Caco-2 (cell line): ENCODE measurements at regions of chr1 and their contacts with region 1.

Region 1: DNA sequence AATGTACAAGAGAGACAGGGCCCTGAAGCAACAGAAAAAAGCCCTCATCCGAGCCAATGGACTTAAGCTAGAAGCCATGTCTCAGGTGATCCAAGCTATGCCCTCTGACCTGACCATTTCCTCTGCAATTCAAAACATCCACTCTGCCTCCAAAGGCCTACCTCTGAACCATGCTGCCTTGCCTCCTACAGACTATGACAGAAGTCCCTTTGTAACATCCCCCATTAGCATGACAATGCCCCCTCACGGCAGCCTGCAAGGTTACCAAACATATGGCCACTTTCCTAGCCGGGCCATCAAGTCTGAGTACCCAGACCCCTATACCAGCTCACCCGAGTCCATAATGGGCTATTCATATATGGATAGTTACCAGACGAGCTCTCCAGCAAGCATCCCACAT is 20.7 kb downstream of the NR5A2 start:
- DNase-seq: no peak
- H3K4me3 ChIP-seq: no peak overlapping the region
- H3K4me3 Mint-ChIP-seq: no peak overlapping the region
- H3K27ac Mint-ChIP-seq: no peak overlapping the region
- H3K4me1 ChIP-seq: peaks cover 28% of the 10 kb centered on the region
- H3K4me1 Mint-ChIP-seq: peaks cover 16% of the 10 kb centered on the region
- H3K27me3 ChIP-seq: no peaks in the 10 kb centered on the region
- H3K27me3 Mint-ChIP-seq: no peaks in the 10 kb centered on the region
- CTCF ChIP-seq: no peak

Region 2: DNA sequence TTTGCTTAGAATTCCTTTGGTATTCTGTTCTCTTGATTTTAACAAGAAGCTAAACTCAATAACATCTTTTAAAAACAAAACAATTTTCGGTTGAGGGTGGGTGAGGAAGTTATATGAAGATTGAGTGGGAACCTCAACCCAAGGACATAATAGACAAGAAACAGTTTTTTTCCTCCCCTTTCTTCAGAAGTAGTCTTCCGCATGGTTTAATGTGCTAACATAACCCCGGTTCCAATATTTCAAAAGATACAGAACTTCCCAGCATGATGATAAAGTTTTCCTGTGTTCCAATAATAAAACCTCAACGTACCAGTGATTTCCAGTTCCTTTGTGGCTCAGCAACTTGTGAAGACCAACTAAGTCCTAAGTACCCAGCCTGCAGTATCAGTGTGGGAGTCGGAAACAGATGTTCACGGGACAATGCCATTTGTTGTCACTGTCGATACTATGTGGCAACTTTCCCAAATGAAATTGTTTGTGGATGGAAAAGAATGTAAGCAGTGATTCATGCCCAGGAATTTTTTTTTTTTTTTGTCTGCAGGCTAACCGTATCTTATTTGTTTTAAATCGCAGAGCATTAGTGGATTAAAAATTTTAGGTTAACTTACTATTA is 27.8 kb after region 1 on chr1:
- CTCF ChIA-PET with region 1: no interaction called
- POLR2A ChIA-PET with region 1: no interaction called
- intact Hi-C with region 1: loop called (anchors 2 kb)
- DNase-seq: peak; percentile 45 to 49
- H3K4me3 ChIP-seq: no peak overlapping the region
- H3K4me3 Mint-ChIP-seq: no peak overlapping the region
- H3K27ac Mint-ChIP-seq: no peak overlapping the region
- H3K4me1 ChIP-seq: peaks cover 4% of the 10 kb centered on the region; the same call in 1 of the 2 replicates
- H3K4me1 Mint-ChIP-seq: peaks cover 12% of the 10 kb centered on the region
- H3K27me3 ChIP-seq: no peaks in the 10 kb centered on the region
- H3K27me3 Mint-ChIP-seq: no peaks in the 10 kb centered on the region
- CTCF ChIP-seq: no peak

Region 3: DNA sequence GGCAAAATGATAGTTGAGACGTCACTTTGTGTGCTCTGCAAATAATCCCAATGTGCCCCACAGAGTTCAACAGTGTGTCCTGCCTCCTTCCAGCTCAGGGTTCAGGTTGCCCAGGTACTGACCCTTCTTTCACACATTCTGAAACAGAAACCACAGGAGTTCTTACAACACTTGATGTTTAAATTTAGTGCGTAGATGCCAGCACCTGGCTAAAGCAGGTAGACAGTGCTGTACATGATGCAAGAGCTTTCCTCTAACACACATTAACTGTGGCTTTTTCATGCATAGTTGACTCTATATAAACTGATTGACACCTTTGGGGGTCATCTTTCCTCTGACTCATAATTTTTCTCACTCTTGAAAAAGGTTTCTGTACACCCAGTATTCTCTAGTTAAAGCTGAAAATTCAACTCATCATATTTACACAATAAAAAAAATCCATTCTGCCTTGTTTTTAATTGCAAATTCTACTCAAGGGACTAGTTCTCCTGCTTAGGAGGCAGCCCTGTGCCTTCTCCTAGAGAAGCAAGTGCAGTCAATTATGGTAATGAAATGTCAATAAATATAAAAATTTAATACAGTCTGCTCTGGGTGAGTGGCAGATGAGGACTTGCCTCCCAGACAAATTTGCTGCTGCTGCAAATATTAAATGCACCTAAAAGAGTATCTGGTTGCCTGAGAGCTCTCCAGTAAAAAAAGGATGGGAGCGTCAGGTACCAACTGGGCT is 70.7 kb after region 1 on chr1:
- CTCF ChIA-PET with region 1: no interaction called
- POLR2A ChIA-PET with region 1: no interaction called
- intact Hi-C with region 1: no loop called
- DNase-seq: no peak
- H3K4me3 ChIP-seq: no peak overlapping the region
- H3K4me3 Mint-ChIP-seq: no peak overlapping the region
- H3K27ac Mint-ChIP-seq: no peak overlapping the region
- H3K4me1 ChIP-seq: peaks cover 7% of the 10 kb centered on the region
- H3K4me1 Mint-ChIP-seq: no peaks in the 10 kb centered on the region
- H3K27me3 ChIP-seq: no peaks in the 10 kb centered on the region
- H3K27me3 Mint-ChIP-seq: no peaks in the 10 kb centered on the region
- CTCF ChIP-seq: no peak